CD4-positive, alpha-beta T cell (primary cell): ENCODE measurements at regions of chr3 and their contacts with region 1.

Region 1: DNA sequence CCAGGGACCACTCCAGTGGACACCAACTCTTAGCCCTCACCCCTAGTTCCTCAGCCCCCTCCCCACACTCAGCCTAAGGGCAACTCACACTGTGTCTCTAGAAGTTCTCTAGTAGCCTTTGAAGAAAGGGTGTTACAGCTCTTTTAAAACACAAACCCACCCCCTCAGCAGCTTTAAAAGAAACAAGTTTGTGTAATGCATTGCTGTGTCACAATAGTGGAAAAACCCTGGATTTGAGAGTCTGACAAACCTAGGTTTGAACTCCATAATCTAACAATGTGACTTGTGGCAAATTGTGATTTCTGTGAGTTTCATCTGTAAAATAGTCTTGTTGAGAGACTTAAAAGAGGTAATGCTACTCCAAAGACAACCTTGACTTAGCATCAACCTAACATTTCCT is 54.0 kb downstream of the PLCH1 start:
- DNase-seq: no peak
- ATAC-seq: no peak
- H3K4me3 ChIP-seq: no peak overlapping the region
- H3K4me3 Mint-ChIP-seq: no peak overlapping the region
- H3K27ac ChIP-seq: no peak overlapping the region
- H3K27ac Mint-ChIP-seq: no peak overlapping the region
- H3K4me1 ChIP-seq: no peaks in the 10 kb centered on the region
- H3K4me1 Mint-ChIP-seq: no peaks in the 10 kb centered on the region
- H3K27me3 ChIP-seq: no peaks in the 10 kb centered on the region
- H3K27me3 Mint-ChIP-seq: peaks cover 4% of the 10 kb centered on the region
- CTCF ChIP-seq: no peak

Region 2: GRCh38 chr3:154034797-154035330 is 1656.1 kb before region 1 on chr3:
- CTCF ChIA-PET with region 1: no interaction called
- POLR2A ChIA-PET with region 1: no interaction called
- intact Hi-C with region 1: loop called in 1 of 2 experiments (anchors 10 kb)
- DNase-seq: no peak
- ATAC-seq: no peak
- H3K4me3 ChIP-seq: no peak overlapping the region
- H3K4me3 Mint-ChIP-seq: no peak overlapping the region
- H3K27ac ChIP-seq: no peak overlapping the region
- H3K27ac Mint-ChIP-seq: no peak overlapping the region
- H3K4me1 ChIP-seq: no peaks in the 10 kb centered on the region
- H3K4me1 Mint-ChIP-seq: no peaks in the 10 kb centered on the region
- H3K27me3 ChIP-seq: no peaks in the 10 kb centered on the region
- H3K27me3 Mint-ChIP-seq: no peaks in the 10 kb centered on the region
- CTCF ChIP-seq: no peak

Region 3: GRCh38 chr3:155676252-155676981 is 14.5 kb before region 1 on chr3:
- CTCF ChIA-PET with region 1: no interaction called
- POLR2A ChIA-PET with region 1: no interaction called
- intact Hi-C with region 1: no loop called
- DNase-seq: no peak
- ATAC-seq: no peak
- H3K4me3 ChIP-seq: no peak overlapping the region
- H3K4me3 Mint-ChIP-seq: no peak overlapping the region
- H3K27ac ChIP-seq: no peak overlapping the region
- H3K27ac Mint-ChIP-seq: no peak overlapping the region
- H3K4me1 ChIP-seq: no peaks in the 10 kb centered on the region
- H3K4me1 Mint-ChIP-seq: no peaks in the 10 kb centered on the region
- H3K27me3 ChIP-seq: no peaks in the 10 kb centered on the region
- H3K27me3 Mint-ChIP-seq: peaks cover 5% of the 10 kb centered on the region
- CTCF ChIP-seq: no peak